Calu3 (cell line): ENCODE measurements at regions of chr20 and their contacts with region 1.

Region 1: GRCh38 chr20:59940174-59940971 is at the starts of genes FAM217B and PPP1R3D:
- DNase-seq: peak; percentile 100
- H3K4me3 Mint-ChIP-seq: peak within 1 kb of the TSS; percentile 92
- H3K27ac Mint-ChIP-seq: peak within 1 kb of the TSS; percentile 95
- H3K4me1 Mint-ChIP-seq: peaks cover 34% of the 10 kb centered on the region
- H3K27me3 Mint-ChIP-seq: no peaks in the 10 kb centered on the region
- CTCF ChIP-seq: no peak
- total RNA-seq, gene FAM217B: 32.3 and 34.4 TPM in 2 replicates
- total RNA-seq, gene PPP1R3D: 16.6 and 17.9 TPM in 2 replicates

Region 2: GRCh38 chr20:59705651-59706399 is 234.5 kb before region 1 on chr20:
- CTCF ChIA-PET with region 1: no interaction called
- intact Hi-C with region 1: no loop called
- DNase-seq: no peak
- H3K4me3 Mint-ChIP-seq: no peak overlapping the region
- H3K27ac Mint-ChIP-seq: no peak overlapping the region
- H3K4me1 Mint-ChIP-seq: no peaks in the 10 kb centered on the region
- H3K27me3 Mint-ChIP-seq: peaks cover 91% of the 10 kb centered on the region
- CTCF ChIP-seq: no peak

Region 3: GRCh38 chr20:59925939-59926338 is 14.4 kb before region 1 on chr20:
- CTCF ChIA-PET with region 1: interaction called, 16 read pairs
- intact Hi-C with region 1: no loop called
- DNase-seq: peak; percentile 50
- H3K4me3 Mint-ChIP-seq: peak overlapping the region; percentile 43
- H3K27ac Mint-ChIP-seq: peak overlapping the region; percentile 83
- H3K4me1 Mint-ChIP-seq: peaks cover 73% of the 10 kb centered on the region
- H3K27me3 Mint-ChIP-seq: no peaks in the 10 kb centered on the region
- CTCF ChIP-seq: no peak

Region 4: GRCh38 chr20:59972037-59972801 is 31.8 kb after region 1 on chr20:
- CTCF ChIA-PET with region 1: interaction called, 12 read pairs
- intact Hi-C with region 1: no loop called
- DNase-seq: peak; percentile 63
- H3K4me3 Mint-ChIP-seq: peak overlapping the region; percentile 42
- H3K27ac Mint-ChIP-seq: peak overlapping the region; percentile 74
- H3K4me1 Mint-ChIP-seq: peaks cover 25% of the 10 kb centered on the region
- H3K27me3 Mint-ChIP-seq: no peaks in the 10 kb centered on the region
- CTCF ChIP-seq: no peak

Region 5: GRCh38 chr20:60543598-60543997 is 603.2 kb after region 1 on chr20:
- CTCF ChIA-PET with region 1: no interaction called
- intact Hi-C with region 1: no loop called
- DNase-seq: no peak
- H3K4me3 Mint-ChIP-seq: no peak overlapping the region
- H3K27ac Mint-ChIP-seq: no peak overlapping the region
- H3K4me1 Mint-ChIP-seq: no peaks in the 10 kb centered on the region
- H3K27me3 Mint-ChIP-seq: no peaks in the 10 kb centered on the region
- CTCF ChIP-seq: no peak

Region 6: DNA sequence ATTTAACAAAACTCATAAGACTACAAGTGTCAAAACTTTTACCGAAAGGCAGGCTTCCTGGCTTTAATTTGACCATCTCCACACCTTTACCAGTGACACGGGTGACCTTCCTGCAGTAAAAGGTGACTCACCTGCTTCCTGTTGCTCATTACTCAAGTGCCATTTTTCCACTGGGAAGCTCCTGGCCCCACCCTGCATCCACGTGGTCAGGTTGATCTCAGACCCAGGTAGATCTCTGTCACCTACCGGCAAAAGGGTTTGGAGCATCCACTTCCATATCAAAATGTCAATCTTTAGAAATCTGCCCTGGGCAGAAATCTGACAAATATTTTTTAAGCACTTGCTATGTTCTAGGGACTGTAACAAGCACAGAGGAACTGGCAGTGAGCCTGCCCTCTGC is 1279.8 kb after region 1 on chr20:
- CTCF ChIA-PET with region 1: no interaction called
- intact Hi-C with region 1: loop called (anchors 10 kb)
- DNase-seq: no peak
- H3K4me3 Mint-ChIP-seq: no peak overlapping the region
- H3K27ac Mint-ChIP-seq: no peak overlapping the region
- H3K4me1 Mint-ChIP-seq: no peaks in the 10 kb centered on the region
- H3K27me3 Mint-ChIP-seq: peaks cover 31% of the 10 kb centered on the region
- CTCF ChIP-seq: no peak

Region 7: GRCh38 chr20:61896058-61896961 is 1955.9 kb after region 1 on chr20:
- CTCF ChIA-PET with region 1: no interaction called
- intact Hi-C with region 1: loop called (anchors 10 kb)
- DNase-seq: peak; percentile 73
- H3K4me3 Mint-ChIP-seq: no peak overlapping the region
- H3K27ac Mint-ChIP-seq: no peak overlapping the region
- H3K4me1 Mint-ChIP-seq: no peaks in the 10 kb centered on the region
- H3K27me3 Mint-ChIP-seq: peaks cover 98% of the 10 kb centered on the region
- CTCF ChIP-seq: peak; percentile 93